ENCODE measurements at regions of chr2 and their contacts with region 1.

Region 1: GRCh38 chr2:26244309-26245121 is at the starts of genes HADHA and HADHB:
- DNase-seq: peak; percentile 93
- ATAC-seq: peak; percentile 91
- H3K4me3 Mint-ChIP-seq: peak within 1 kb of the TSS; percentile 100
- H3K27ac Mint-ChIP-seq: peak within 1 kb of the TSS; percentile 96
- H3K4me1 Mint-ChIP-seq: peaks cover 35% of the 10 kb centered on the region
- H3K27me3 Mint-ChIP-seq: no peaks in the 10 kb centered on the region
- CTCF ChIP-seq: no peak
- total RNA-seq, gene HADHA: 118 to 123 TPM (median 121 TPM) in 3 replicates
- total RNA-seq, gene HADHB: 59.8 to 64.5 TPM (median 60.7 TPM) in 3 replicates

Region 2: DNA sequence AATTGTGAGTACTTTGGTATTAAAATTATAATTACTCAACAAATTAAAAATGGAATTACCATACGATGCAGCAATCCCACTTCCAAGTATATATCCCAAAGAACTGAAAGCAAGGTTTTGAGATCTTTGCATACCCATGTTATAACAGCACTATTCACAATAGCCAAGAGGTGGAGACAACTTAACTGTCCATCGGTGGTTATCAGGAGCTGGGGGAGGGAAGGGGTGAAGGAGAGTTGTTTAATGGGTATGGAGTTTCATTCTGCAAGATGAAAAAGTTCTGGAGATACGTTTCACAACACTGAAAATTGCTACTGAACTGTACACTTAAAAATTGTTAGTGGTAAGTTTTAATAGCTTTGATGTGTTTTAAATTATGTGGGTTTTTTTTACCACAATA is 185.0 kb before region 1 on chr2:
- CTCF ChIA-PET with region 1: no interaction called
- POLR2A ChIA-PET with region 1: no interaction called
- DNase-seq: no peak
- ATAC-seq: no peak
- H3K4me3 Mint-ChIP-seq: no peak overlapping the region
- H3K27ac Mint-ChIP-seq: peak overlapping the region; percentile 42; the same call in 1 of the 2 replicates
- H3K4me1 Mint-ChIP-seq: peaks cover 21% of the 10 kb centered on the region
- H3K27me3 Mint-ChIP-seq: no peaks in the 10 kb centered on the region
- CTCF ChIP-seq: no peak

Region 3: GRCh38 chr2:26299471-26300101 is 55.1 kb after region 1 on chr2:
- CTCF ChIA-PET with region 1: interaction called, 5 read pairs
- POLR2A ChIA-PET with region 1: interaction called, 27 read pairs
- DNase-seq: no peak
- ATAC-seq: peak; percentile 44
- H3K4me3 Mint-ChIP-seq: no peak overlapping the region
- H3K27ac Mint-ChIP-seq: no peak overlapping the region
- H3K4me1 Mint-ChIP-seq: no peaks in the 10 kb centered on the region
- H3K27me3 Mint-ChIP-seq: no peaks in the 10 kb centered on the region
- CTCF ChIP-seq: no peak

Region 4: DNA sequence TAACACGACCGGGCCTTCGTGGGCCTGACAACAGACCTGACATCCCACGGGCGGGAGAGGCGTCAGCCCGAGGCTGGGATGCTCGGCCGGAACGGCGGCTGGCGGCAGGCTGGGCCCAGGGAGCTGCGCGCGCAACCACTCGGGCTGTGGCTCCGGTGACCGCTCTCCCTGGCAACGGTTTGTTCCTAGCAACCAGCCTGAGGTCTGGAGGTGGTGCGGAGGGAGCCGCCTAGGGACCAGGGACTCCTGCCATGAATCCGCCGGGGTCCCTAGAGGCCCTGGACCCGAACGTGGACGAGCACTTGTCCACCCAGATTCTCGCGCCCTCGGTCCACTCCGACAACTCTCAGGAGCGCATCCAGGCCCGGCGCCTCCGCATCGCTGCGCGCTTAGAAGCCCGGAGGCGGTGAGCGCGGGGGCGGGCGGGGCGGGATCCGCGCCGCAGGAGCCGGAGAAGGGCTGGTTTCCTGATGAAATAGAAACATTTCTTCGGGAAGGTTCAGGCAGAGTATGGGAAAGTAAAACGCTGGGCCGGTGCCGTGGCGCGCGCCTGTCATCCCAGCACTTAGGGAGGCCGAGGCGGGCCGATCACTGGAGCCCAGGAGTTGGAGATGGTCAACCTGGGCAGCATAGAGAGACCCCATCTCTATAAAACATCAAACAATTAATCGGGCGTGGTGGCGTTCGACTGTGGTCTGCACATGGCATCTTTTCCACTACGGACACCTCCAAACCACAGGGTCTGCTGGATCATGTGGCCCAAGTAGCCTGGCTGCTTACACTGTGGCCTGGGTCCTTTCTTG is 157.4 kb after region 1 on chr2 and contains the start of gene DRC1:
- CTCF ChIA-PET with region 1: no interaction called
- POLR2A ChIA-PET with region 1: no interaction called
- DNase-seq: peak; percentile 93
- ATAC-seq: peak; percentile 97
- H3K4me3 Mint-ChIP-seq: peak within 1 kb of the TSS; percentile 61
- H3K27ac Mint-ChIP-seq: no peak within 1 kb of the TSS
- H3K4me1 Mint-ChIP-seq: peaks cover 3% of the 10 kb centered on the region; the same call in 1 of the 2 replicates
- H3K27me3 Mint-ChIP-seq: peaks cover 10% of the 10 kb centered on the region; the same call in 1 of the 2 replicates
- CTCF ChIP-seq: no peak
- total RNA-seq, gene DRC1: 0.55 TPM in 1 of 3 replicates, not detected in the others